ENCODE measurements at regions of chr7 and their contacts with region 1.

Region 1: DNA sequence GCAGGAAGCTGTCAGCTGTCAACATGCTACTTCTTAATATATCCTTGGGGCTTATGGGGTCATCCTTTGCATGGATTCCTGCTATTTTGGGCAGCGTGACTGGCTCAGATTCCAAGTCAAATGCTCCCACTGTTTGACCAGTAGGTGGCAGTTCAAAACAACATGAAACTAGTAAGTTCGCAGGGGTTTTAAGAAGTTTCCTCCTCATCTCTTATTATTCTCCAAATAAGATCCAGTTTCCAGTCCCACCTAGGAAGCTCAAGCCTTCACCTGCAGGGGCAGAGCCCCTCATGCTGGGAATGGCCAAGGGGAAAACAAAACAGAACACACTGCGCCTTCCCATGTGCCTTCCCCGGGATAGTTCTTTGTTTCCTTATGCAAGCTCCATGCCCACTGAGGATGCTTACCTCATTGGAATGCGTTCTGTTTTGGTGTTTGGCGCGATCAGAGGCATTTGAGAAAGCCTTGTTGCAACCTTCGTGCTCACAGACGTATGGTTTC is 259.8 kb downstream of the GLI3 start:
- DNase-seq: peak; percentile 32
- H3K4me3 Mint-ChIP-seq: no peak overlapping the region
- H3K27ac Mint-ChIP-seq: no peak overlapping the region
- H3K4me1 Mint-ChIP-seq: no peaks in the 10 kb centered on the region
- H3K27me3 Mint-ChIP-seq: peaks cover 63% of the 10 kb centered on the region
- CTCF ChIP-seq: peak; percentile 45

Region 2: GRCh38 chr7:42831718-42832431 is 854.7 kb after region 1 on chr7:
- CTCF ChIA-PET with region 1: interaction called, 6 read pairs
- intact Hi-C with region 1: loop called (anchors 2 kb)
- DNase-seq: peak; percentile 40
- H3K4me3 Mint-ChIP-seq: no peak overlapping the region
- H3K27ac Mint-ChIP-seq: no peak overlapping the region
- H3K4me1 Mint-ChIP-seq: no peaks in the 10 kb centered on the region
- H3K27me3 Mint-ChIP-seq: peaks cover 65% of the 10 kb centered on the region
- CTCF ChIP-seq: no peak

Region 3: DNA sequence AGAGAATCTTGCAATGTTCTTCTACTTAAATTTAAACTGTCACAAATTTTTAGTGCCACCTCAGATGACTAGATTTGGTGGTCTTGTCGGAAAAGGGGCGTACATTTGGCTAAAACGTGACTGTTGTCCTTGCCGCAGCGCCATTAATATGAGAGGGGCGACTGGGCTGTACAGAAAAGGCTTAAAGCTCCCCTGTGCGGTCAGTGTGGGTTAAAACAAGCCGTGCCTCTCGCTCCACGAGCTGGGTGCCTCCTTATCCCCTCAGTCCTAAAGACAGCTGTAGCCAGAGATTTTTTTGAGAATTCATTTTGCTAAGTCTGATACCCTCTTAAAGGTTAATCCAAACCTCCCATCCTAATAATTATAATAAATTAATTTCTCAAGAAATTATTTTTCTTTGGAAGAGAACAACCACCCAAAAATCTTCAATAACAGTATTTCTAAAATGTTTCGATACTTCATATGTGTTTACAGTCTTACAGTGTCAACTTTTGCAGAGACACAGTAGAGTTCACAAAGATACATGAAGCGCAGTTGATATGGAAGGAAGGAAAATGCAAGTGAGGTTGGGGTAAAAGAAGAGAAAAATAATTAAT is 866.1 kb after region 1 on chr7:
- CTCF ChIA-PET with region 1: interaction called, 15 read pairs
- intact Hi-C with region 1: no loop called
- DNase-seq: peak; percentile 56
- H3K4me3 Mint-ChIP-seq: no peak overlapping the region
- H3K27ac Mint-ChIP-seq: no peak overlapping the region
- H3K4me1 Mint-ChIP-seq: no peaks in the 10 kb centered on the region
- H3K27me3 Mint-ChIP-seq: peaks cover 81% of the 10 kb centered on the region
- CTCF ChIP-seq: peak; percentile 53

Measured in Calu3 (cell line).